ENCODE measurements at regions of chr17 and their contacts with region 1.

Region 1: DNA sequence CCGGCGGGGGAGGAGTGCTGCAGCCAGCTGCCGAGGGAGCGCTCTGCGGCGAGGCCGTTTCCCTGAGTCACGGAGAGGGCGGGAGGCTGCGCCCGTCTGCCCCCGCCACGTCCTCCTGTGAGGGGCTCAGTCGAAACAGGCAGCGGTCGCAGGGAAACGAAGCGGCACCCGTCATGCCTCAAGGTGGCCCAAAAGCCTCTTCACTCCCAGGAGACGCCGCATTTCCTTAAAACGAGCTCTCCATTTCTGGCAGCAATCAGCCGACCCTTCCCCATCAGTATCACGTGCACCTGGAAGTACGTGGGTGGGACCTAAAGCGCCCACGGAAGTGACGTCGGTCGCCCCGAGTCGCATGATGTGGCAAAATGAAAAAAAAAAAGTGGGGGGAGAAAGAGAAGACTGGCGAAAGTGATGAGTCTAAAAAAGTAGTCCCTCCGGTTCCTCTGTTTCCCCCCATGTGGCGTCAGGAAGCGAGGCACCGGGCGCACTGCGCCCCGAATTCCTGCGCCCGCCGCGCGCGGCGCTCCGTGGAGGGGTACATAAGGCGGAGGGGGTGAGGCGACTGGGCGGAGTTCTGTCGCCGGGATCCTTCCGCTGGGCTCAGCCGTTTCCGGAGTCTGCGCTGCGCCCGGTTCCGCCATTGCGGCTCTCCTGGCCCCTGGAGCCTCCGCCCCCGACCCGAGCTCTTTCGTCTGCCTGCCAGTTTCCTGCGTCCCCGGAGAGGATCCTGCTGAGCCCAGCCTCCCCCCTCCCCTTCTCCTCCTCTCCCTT is at the start of gene CLTC:
- DNase-seq: peak; percentile 96
- ATAC-seq: peak; percentile 94
- total RNA-seq, gene CLTC: 136 TPM

Region 2: GRCh38 chr17:59565171-59565969 is 54.1 kb before region 1 on chr17 and contains the start of gene DHX40:
- intact Hi-C with region 1: loop called (anchors 1 kb)
- DNase-seq: peak; percentile 97
- ATAC-seq: peak; percentile 98
- total RNA-seq, gene DHX40: 18.0 TPM

Region 3: DNA sequence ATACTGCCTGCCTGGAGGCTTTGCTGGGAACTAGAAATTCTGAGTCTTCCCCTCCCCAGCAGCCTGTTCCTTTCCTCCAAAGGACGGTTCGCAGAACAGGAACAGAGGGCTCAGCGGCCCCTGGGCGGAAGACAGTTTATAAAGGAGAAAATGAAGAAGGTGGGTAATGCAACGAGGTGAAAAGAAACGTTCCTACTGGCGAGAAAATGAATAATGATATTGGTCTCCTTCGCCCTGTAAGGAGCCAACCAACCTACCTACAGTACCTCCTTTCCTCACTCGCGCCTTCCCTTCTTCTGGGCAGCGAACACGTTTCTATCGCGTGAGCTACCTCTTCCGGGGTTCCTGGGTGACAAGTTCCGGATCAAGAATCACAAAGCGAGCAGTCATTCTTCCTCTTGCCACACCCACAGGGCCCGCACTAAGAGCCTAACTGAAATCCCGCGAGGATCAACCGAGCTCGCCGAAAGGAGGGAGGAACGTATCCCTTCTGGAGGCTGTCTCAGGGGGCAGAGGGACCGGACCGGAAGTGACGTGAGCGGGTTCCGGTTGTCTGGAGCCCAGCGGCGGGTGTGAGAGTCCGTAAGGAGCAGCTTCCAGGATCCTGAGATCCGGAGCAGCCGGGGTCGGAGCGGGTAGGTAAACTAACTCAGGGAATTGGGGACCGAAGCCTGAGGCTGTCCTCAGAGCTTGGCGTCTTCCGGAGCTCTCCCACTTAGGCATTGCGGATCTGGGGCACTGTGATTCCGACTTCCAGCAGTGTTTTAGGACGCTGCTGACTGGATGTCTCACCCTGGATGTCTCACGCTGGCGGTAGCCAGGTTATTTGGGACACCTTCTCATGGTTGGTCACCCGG is 87.9 kb after region 1 on chr17 and contains the starts of genes PTRH2 and VMP1:
- intact Hi-C with region 1: loop called (anchors 2 kb)
- DNase-seq: peak; percentile 98
- ATAC-seq: peak; percentile 99
- total RNA-seq, gene PTRH2: 10.2 TPM
- total RNA-seq, gene VMP1: 50.6 TPM

Measured in Right ventricle myocardium inferior (tissue), 1 donor.